ENCODE measurements at regions of chr11 and their contacts with region 1.

Region 1: GRCh38 chr11:11787305-11788062 is 54.3 kb upstream of the USP47 start:
- DNase-seq: peak; percentile 59 to 67 (median 61)
- H3K4me3 ChIP-seq: no peak overlapping the region
- H3K4me3 Mint-ChIP-seq: no peak overlapping the region
- H3K27ac ChIP-seq: no peak overlapping the region
- H3K27ac Mint-ChIP-seq: no peak overlapping the region
- H3K4me1 ChIP-seq: no peaks in the 10 kb centered on the region
- H3K4me1 Mint-ChIP-seq: peaks cover 0 to 1% (median 0%) of the 10 kb centered on the region in 4 donors
- H3K27me3 ChIP-seq: no peaks in the 10 kb centered on the region
- H3K27me3 Mint-ChIP-seq: peaks cover 0 to 7% of the 10 kb centered on the region in 2 donors

Region 2: DNA sequence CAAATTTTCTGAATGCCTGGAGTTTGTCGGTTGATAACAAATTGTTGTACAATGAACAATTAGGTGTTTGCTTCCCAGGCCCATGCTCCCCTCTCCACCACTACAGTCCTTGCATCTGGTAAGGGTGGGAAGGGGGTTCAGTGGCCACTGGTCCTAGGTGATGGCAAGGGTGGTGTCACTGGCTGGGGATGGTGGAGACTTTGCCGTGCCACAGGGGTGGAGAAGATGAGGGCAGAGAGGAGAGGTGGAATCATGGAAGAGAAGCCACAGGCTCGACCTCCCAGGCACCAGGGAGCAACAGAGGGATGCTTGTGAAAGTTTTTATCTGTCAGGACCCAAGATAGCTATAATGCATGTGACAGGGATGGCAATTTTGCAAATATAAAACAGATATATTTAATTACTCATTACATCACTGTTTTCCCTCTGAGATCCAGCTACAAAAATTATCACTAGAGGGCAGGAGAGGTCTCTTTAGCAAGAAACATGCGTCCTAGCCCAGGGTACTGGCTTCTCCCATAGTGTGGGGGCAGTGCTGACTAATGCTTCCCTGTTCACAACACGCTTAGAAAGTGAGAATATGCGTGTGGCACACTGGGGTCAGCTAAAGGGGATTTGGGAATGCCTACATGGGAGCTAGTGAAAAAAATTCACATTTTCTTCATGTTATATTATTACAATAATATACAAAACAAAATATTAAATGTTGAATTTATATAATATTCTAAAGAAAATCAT is 1381.5 kb before region 1 on chr11:
- CTCF ChIA-PET with region 1: no interaction called
- POLR2A ChIA-PET with region 1: no interaction called
- intact Hi-C with region 1: loop called (anchors 2 kb)
- DNase-seq: peak in 4 of 5 donors; percentile 49 to 54 (median 51)
- H3K4me3 ChIP-seq: no peak overlapping the region
- H3K4me3 Mint-ChIP-seq: no peak overlapping the region
- H3K27ac ChIP-seq: no peak overlapping the region
- H3K27ac Mint-ChIP-seq: peak overlapping the region in 2 of 7 donors; percentile 32 to 58
- H3K4me1 ChIP-seq: peaks cover 17% of the 10 kb centered on the region
- H3K4me1 Mint-ChIP-seq: peaks cover 19 to 51% (median 25%) of the 10 kb centered on the region in 4 donors
- H3K27me3 ChIP-seq: no peaks in the 10 kb centered on the region
- H3K27me3 Mint-ChIP-seq: no peaks in the 10 kb centered on the region

Region 3: GRCh38 chr11:11709447-11710239 is 77.8 kb before region 1 on chr11:
- CTCF ChIA-PET with region 1: no interaction called
- POLR2A ChIA-PET with region 1: no interaction called
- intact Hi-C with region 1: no loop called
- DNase-seq: no peak
- H3K4me3 ChIP-seq: no peak overlapping the region
- H3K4me3 Mint-ChIP-seq: no peak overlapping the region
- H3K27ac ChIP-seq: no peak overlapping the region
- H3K27ac Mint-ChIP-seq: no peak overlapping the region
- H3K4me1 ChIP-seq: no peaks in the 10 kb centered on the region
- H3K4me1 Mint-ChIP-seq: no peaks in the 10 kb centered on the region
- H3K27me3 ChIP-seq: no peaks in the 10 kb centered on the region
- H3K27me3 Mint-ChIP-seq: peaks cover 3% of the 10 kb centered on the region in 2 donors

Region 4: DNA sequence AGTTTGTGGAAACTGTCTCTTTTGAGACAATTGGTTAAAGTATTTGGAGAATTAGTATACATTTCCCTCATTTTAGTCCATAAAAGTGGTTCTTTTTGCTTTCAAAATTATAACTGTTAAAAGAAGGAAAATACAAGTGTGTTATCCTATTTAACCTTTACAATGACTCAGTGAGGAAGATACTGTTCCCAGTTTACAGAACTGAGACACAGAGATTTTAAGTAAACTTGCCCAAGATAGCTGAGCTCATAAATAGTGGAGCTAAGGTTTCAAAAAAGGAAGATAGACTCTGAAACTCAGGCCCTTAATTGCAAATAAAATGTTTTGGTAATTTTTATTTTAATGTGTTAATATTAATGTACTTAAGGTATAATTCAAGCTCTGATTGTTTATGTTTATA is 162.0 kb after region 1 on chr11:
- CTCF ChIA-PET with region 1: no interaction called
- POLR2A ChIA-PET with region 1: no interaction called
- intact Hi-C with region 1: no loop called
- DNase-seq: no peak
- H3K4me3 ChIP-seq: no peak overlapping the region
- H3K4me3 Mint-ChIP-seq: no peak overlapping the region
- H3K27ac ChIP-seq: no peak overlapping the region
- H3K27ac Mint-ChIP-seq: peak overlapping the region in 2 of 7 donors; percentile 6 to 8
- H3K4me1 ChIP-seq: no peaks in the 10 kb centered on the region
- H3K4me1 Mint-ChIP-seq: peaks cover 0 to 2% (median 0%) of the 10 kb centered on the region in 4 donors
- H3K27me3 ChIP-seq: no peaks in the 10 kb centered on the region
- H3K27me3 Mint-ChIP-seq: no peaks in the 10 kb centered on the region